ENCODE measurements at regions of chr6 and their contacts with region 1.

Region 1: GRCh38 chr6:45922728-45923351 is 92.8 kb downstream of the CLIC5 start:
- DNase-seq: no peak
- ATAC-seq: peak; percentile 77
- H3K4me3 ChIP-seq: no peak overlapping the region
- H3K27ac ChIP-seq: no peak overlapping the region
- H3K4me1 ChIP-seq: peaks cover 23% of the 10 kb centered on the region
- H3K27me3 ChIP-seq: no peaks in the 10 kb centered on the region; a peak in 1 of 4 replicates
- CTCF ChIP-seq: peak; percentile 63 to 81 (median 75)
- EP300 ChIP-seq: no peak
- POLR2A ChIP-seq: no peak
- RAD21 ChIP-seq: peak; percentile 88

Region 2: GRCh38 chr6:44593539-44593944 is 1329.3 kb before region 1 on chr6:
- CTCF ChIA-PET with region 1: interaction called, 11 read pairs
- POLR2A ChIA-PET with region 1: no interaction called
- RAD21 ChIA-PET with region 1: interaction called, 6 read pairs
- SMC1A ChIA-PET with region 1: interaction called, 10 read pairs
- in situ Hi-C with region 1: loop called (anchors 10 kb)
- intact Hi-C with region 1: loop called (anchors 1 kb)
- DNase-seq: peak; percentile 7
- ATAC-seq: peak; percentile 93
- H3K4me3 ChIP-seq: no peak overlapping the region
- H3K27ac ChIP-seq: no peak overlapping the region
- H3K4me1 ChIP-seq: no peaks in the 10 kb centered on the region
- H3K27me3 ChIP-seq: peaks cover 0 to 2% of the 10 kb centered on the region in 2 experiments; a peak in 1 of 4 replicates
- CTCF ChIP-seq: peak; percentile 55 to 60 (median 56); a peak in 5 of 6 replicates
- EP300 ChIP-seq: no peak
- POLR2A ChIP-seq: no peak
- RAD21 ChIP-seq: peak; percentile 63

Region 3: GRCh38 chr6:44655412-44656342 is 1267.2 kb before region 1 on chr6:
- CTCF ChIA-PET with region 1: interaction called, 88 read pairs
- POLR2A ChIA-PET with region 1: no interaction called
- RAD21 ChIA-PET with region 1: interaction called, 28 read pairs
- SMC1A ChIA-PET with region 1: interaction called, 60 read pairs
- in situ Hi-C with region 1: no loop called
- intact Hi-C with region 1: loop called (anchors 2 kb)
- DNase-seq: no peak
- ATAC-seq: peak; percentile 90
- H3K4me3 ChIP-seq: no peak overlapping the region
- H3K27ac ChIP-seq: no peak overlapping the region
- H3K4me1 ChIP-seq: no peaks in the 10 kb centered on the region; the same call in 1 of the 2 replicates
- H3K27me3 ChIP-seq: peaks cover 0 to 2% of the 10 kb centered on the region in 2 experiments; a peak in 1 of 4 replicates
- CTCF ChIP-seq: peak; percentile 90 to 92 (median 90)
- EP300 ChIP-seq: no peak
- POLR2A ChIP-seq: no peak
- RAD21 ChIP-seq: peak; percentile 92

Region 4: GRCh38 chr6:45086360-45087084 is 836.3 kb before region 1 on chr6:
- CTCF ChIA-PET with region 1: interaction called, 6 read pairs
- POLR2A ChIA-PET with region 1: no interaction called
- RAD21 ChIA-PET with region 1: no interaction called
- SMC1A ChIA-PET with region 1: interaction called, 4 read pairs
- in situ Hi-C with region 1: no loop called
- intact Hi-C with region 1: loop called (anchors 5 kb)
- DNase-seq: no peak
- ATAC-seq: no peak
- H3K4me3 ChIP-seq: no peak overlapping the region
- H3K27ac ChIP-seq: no peak overlapping the region
- H3K4me1 ChIP-seq: no peaks in the 10 kb centered on the region
- H3K27me3 ChIP-seq: no peaks in the 10 kb centered on the region; a peak in 1 of 4 replicates
- CTCF ChIP-seq: no peak
- EP300 ChIP-seq: no peak
- POLR2A ChIP-seq: no peak
- RAD21 ChIP-seq: no peak

Region 5: GRCh38 chr6:45421709-45422502 is 500.9 kb before region 1 on chr6:
- CTCF ChIA-PET with region 1: interaction called, 4 read pairs
- POLR2A ChIA-PET with region 1: no interaction called
- RAD21 ChIA-PET with region 1: interaction called, 3 read pairs
- SMC1A ChIA-PET with region 1: interaction called, 5 read pairs
- in situ Hi-C with region 1: no loop called
- intact Hi-C with region 1: loop called (anchors 5 kb)
- DNase-seq: no peak
- ATAC-seq: peak; percentile 49
- H3K4me3 ChIP-seq: peak overlapping the region; percentile 48; the same call in 1 of the 2 replicates
- H3K27ac ChIP-seq: no peak overlapping the region
- H3K4me1 ChIP-seq: no peaks in the 10 kb centered on the region; the same call in 1 of the 2 replicates
- H3K27me3 ChIP-seq: peaks cover 20 to 38% of the 10 kb centered on the region in 2 experiments
- CTCF ChIP-seq: peak in 2 of 3 experiments; percentile 10 to 15; a peak in 1 of 6 replicates
- EP300 ChIP-seq: no peak
- POLR2A ChIP-seq: no peak
- RAD21 ChIP-seq: no peak

Region 6: DNA sequence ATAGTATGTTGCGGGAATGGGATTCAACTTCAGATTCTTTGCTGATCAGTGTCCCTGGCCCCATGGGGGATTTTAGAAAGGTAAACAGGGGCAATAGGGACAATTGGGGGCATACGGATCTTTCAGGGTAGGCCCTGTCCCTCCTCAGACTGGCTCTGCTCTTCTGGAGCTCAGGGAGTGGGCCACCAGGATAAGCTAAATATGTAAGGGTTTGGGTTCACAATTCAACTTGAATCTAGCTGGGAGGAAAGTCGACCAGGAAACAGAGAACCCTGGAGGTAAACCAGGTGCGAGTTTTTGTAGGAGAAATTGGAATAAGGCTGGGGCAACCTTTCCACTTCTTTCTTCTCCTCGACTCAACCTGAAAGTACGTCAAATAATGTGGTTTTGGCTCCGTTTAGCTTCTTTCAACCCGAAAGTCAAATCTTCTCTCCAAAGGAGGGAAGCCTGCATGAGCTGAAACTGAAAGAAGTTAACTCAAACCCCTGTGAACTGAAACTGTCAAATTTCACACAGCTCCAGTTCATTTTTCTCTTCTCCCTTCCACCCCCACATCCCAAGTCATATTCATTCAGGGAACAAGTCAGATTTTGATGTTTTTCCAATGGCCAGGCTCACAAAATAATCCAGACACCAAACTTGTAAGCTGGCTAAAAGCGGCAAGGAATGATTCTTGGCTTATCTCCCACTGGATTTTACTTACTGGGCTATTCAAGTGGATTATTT is 185.3 kb before region 1 on chr6:
- CTCF ChIA-PET with region 1: interaction called, 7 read pairs
- POLR2A ChIA-PET with region 1: no interaction called
- RAD21 ChIA-PET with region 1: interaction called, 3 read pairs
- SMC1A ChIA-PET with region 1: interaction called, 4 read pairs
- in situ Hi-C with region 1: no loop called
- intact Hi-C with region 1: loop called (anchors 2 kb)
- DNase-seq: peak; percentile 77
- ATAC-seq: peak; percentile 83
- H3K4me3 ChIP-seq: no peak overlapping the region
- H3K27ac ChIP-seq: peak overlapping the region; percentile 42; the same call in 1 of the 2 replicates
- H3K4me1 ChIP-seq: peaks cover 20% of the 10 kb centered on the region
- H3K27me3 ChIP-seq: no peaks in the 10 kb centered on the region; a peak in 2 of 4 replicates
- CTCF ChIP-seq: no peak
- EP300 ChIP-seq: peak; percentile 92 to 96
- POLR2A ChIP-seq: no peak
- RAD21 ChIP-seq: peak; percentile 15; the same call in 1 of the 2 replicates

Region 7: GRCh38 chr6:46011241-46012085 is 88.6 kb after region 1 on chr6:
- CTCF ChIA-PET with region 1: no interaction called
- POLR2A ChIA-PET with region 1: no interaction called
- RAD21 ChIA-PET with region 1: no interaction called
- SMC1A ChIA-PET with region 1: no interaction called
- in situ Hi-C with region 1: no loop called
- intact Hi-C with region 1: no loop called
- DNase-seq: peak; percentile 71
- ATAC-seq: peak; percentile 91
- H3K4me3 ChIP-seq: no peak overlapping the region
- H3K27ac ChIP-seq: no peak overlapping the region
- H3K4me1 ChIP-seq: peaks cover 10% of the 10 kb centered on the region
- H3K27me3 ChIP-seq: peaks cover 6 to 18% of the 10 kb centered on the region in 2 experiments
- CTCF ChIP-seq: no peak
- EP300 ChIP-seq: 0 out of 4 replicates have a peak, but pooled peaks of 1 of the 2 experiments have one; percentile 13
- POLR2A ChIP-seq: no peak
- RAD21 ChIP-seq: no peak